HepG2 (cell line): ENCODE measurements at regions of chr4 and their contacts with region 1.

Region 1: GRCh38 chr4:123364906-123365305 is 31.7 kb upstream of the SPRY1 start:
- DNase-seq: no peak
- ATAC-seq: no peak
- H3K4me3 ChIP-seq: no peak overlapping the region
- H3K27ac ChIP-seq: no peak overlapping the region
- H3K4me1 ChIP-seq: peaks cover 13% of the 10 kb centered on the region
- H3K27me3 ChIP-seq: no peaks in the 10 kb centered on the region
- CTCF ChIP-seq: no peak
- EP300 ChIP-seq: no peak
- POLR2A ChIP-seq: no peak
- RAD21 ChIP-seq: no peak

Region 2: DNA sequence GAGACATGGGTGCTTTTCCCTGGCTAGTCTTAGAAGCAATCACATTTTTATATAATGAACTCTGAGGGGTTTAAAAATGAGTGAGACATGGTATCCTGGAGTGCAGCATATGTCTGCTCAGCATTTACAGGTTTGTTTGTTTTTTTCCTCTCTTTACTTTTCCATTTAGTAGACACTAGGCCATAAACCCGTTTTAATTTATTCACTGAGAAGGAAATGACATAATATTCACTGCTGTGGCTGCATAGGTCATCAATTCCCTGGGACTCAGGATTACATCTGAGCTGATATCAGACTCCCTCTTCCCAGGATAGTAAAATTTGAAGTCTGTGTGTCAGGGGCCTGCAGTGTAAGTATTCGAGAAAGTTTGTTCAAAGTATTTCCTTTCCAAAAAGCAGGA is 147.2 kb before region 1 on chr4:
- CTCF ChIA-PET with region 1: no interaction called
- POLR2A ChIA-PET with region 1: no interaction called
- in situ Hi-C with region 1: loop called (anchors 5 kb)
- intact Hi-C with region 1: no loop called
- DNase-seq: no peak
- ATAC-seq: no peak
- H3K4me3 ChIP-seq: no peak overlapping the region
- H3K27ac ChIP-seq: no peak overlapping the region
- H3K4me1 ChIP-seq: no peaks in the 10 kb centered on the region
- H3K27me3 ChIP-seq: no peaks in the 10 kb centered on the region; a peak in 1 of 5 replicates
- CTCF ChIP-seq: no peak
- EP300 ChIP-seq: no peak
- POLR2A ChIP-seq: no peak
- RAD21 ChIP-seq: no peak